Activated CD4-positive, alpha-beta T cell treated with anti-CD3 and anti-CD28 coated beads for 36 hours (primary cell): ENCODE measurements at regions of chr17 and their contacts with region 1.

Region 1: DNA sequence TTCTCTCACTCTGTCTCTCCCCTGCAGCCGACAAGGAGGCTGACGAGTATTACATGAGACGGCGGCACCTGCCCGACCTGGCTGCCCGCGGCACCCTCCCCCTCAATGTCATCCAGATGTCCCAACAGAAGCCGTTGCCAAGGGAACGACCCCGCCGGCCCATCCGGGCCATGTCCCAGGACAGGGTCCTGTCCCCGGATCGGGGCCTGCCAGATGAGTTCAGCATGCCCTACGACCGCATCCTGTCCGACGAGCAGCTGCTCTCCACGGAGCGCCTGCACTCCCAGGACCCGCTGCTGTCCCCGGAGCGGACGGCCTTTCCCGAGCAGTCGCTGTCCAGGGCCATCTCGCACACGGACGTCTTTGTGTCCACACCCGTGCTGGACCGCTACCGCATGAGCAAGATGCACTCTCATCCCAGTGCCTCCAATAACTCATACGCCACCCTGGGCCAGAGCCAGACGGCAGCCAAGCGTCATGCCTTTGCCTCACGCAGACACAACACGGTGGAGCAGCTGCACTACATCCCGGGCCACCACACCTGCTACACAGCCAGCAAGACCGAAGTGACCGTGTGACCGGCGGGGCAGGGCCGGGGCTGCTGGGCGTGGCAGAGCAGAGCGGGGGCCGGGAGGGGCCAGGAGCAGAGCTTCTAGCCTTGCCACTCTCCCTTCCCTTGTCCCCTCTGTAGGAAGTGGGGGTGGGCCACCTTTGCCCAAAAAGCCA is 40.4 kb upstream of the DNAH9 start:
- DNase-seq: no peak
- ATAC-seq: no peak
- H3K4me3 Mint-ChIP-seq: no peak overlapping the region
- H3K27ac Mint-ChIP-seq: no peak overlapping the region
- H3K4me1 Mint-ChIP-seq: no peaks in the 10 kb centered on the region
- H3K27me3 Mint-ChIP-seq: no peaks in the 10 kb centered on the region

Region 2: GRCh38 chr17:11302401-11303106 is 255.3 kb before region 1 on chr17:
- CTCF ChIA-PET with region 1: no interaction called
- POLR2A ChIA-PET with region 1: no interaction called
- intact Hi-C with region 1: loop called in 1 of 2 experiments (anchors 10 kb)
- DNase-seq: no peak
- ATAC-seq: peak; percentile 23
- H3K4me3 Mint-ChIP-seq: no peak overlapping the region
- H3K27ac Mint-ChIP-seq: no peak overlapping the region
- H3K4me1 Mint-ChIP-seq: no peaks in the 10 kb centered on the region
- H3K27me3 Mint-ChIP-seq: no peaks in the 10 kb centered on the region

Region 3: GRCh38 chr17:11467639-11468038 is 90.3 kb before region 1 on chr17:
- CTCF ChIA-PET with region 1: no interaction called
- POLR2A ChIA-PET with region 1: no interaction called
- intact Hi-C with region 1: loop called in 1 of 2 experiments (anchors 10 kb)
- DNase-seq: no peak
- ATAC-seq: no peak
- H3K4me3 Mint-ChIP-seq: no peak overlapping the region
- H3K27ac Mint-ChIP-seq: no peak overlapping the region
- H3K4me1 Mint-ChIP-seq: no peaks in the 10 kb centered on the region
- H3K27me3 Mint-ChIP-seq: no peaks in the 10 kb centered on the region